SK-N-SH (cell line): ENCODE measurements at regions of chr12 and their contacts with region 1.

Region 1: GRCh38 chr12:32755654-32756475 is at the start of gene YARS2:
- DNase-seq: peak; percentile 90
- H3K4me3 ChIP-seq: peak within 1 kb of the TSS; percentile 87 to 97
- H3K27ac ChIP-seq: peak within 1 kb of the TSS; percentile 82 to 91
- H3K4me1 ChIP-seq: peaks cover 9 to 12% of the 10 kb centered on the region in 2 experiments; a peak in 1 of 4 replicates
- H3K27me3 ChIP-seq: no peaks in the 10 kb centered on the region
- CTCF ChIP-seq: peak; percentile 94
- EP300 ChIP-seq: no peak
- RAD21 ChIP-seq: peak; percentile 98
- polyA plus RNA-seq, gene YARS2: 14.3 and 16.5 TPM in 2 replicates

Region 2: DNA sequence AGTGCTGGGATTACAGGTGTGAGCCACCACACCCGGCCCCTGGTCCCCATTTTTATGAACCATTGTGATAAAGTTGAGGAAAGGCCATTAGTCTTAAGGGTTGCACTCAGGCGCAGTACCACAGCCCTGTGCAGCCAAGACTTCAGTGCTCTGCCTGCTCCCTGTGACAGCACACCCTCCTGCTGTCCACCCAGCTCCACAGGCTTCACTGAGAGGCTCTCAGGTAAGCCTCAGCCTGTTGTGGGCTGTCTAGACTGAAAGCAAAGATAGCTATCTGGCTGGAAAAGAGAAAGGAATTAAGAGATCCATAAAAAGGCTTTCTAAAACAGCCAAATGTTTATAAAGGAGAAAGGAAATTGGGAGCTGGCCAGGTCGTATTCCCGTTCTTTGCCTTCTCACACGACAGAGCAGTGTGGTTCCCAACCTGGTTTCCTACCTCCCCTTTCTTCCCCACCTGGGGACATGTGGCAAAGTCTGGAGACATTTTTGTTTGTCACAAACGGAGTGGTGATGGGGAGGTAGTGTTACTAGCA is 95.9 kb before region 1 on chr12:
- CTCF ChIA-PET with region 1: interaction called, 10 read pairs
- POLR2A ChIA-PET with region 1: no interaction called
- DNase-seq: no peak
- H3K4me3 ChIP-seq: no peak overlapping the region
- H3K27ac ChIP-seq: no peak overlapping the region
- H3K4me1 ChIP-seq: peaks cover 0 to 3% of the 10 kb centered on the region in 2 experiments; a peak in 1 of 4 replicates
- H3K27me3 ChIP-seq: no peaks in the 10 kb centered on the region
- CTCF ChIP-seq: no peak
- EP300 ChIP-seq: no peak
- RAD21 ChIP-seq: no peak

Region 3: DNA sequence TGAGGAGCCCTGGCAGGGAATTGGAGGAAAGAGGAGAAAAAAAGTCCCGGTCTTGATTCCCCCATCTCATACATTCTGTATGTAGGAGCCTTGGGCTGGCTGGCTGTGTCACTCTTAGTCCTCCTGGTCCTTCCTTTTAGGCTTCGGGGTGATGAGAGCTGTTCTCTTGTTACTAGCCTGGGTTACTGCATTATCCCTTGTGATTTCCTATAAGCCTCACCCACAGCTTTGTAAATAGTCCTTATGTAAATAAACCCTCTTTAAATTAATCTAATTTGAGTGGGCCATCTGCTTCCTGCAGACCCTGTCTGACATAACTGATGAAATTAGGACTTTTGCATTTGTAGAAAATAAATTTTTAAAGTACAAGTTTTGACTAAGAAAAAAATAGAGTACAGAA is 57.6 kb before region 1 on chr12:
- CTCF ChIA-PET with region 1: interaction called, 12 read pairs
- POLR2A ChIA-PET with region 1: no interaction called
- DNase-seq: peak; percentile 67
- H3K4me3 ChIP-seq: no peak overlapping the region
- H3K27ac ChIP-seq: peak overlapping the region in 1 of 2 experiments; percentile 90; a peak in 2 of 4 replicates
- H3K4me1 ChIP-seq: peaks cover 5 to 20% of the 10 kb centered on the region in 2 experiments; a peak in 2 of 4 replicates
- H3K27me3 ChIP-seq: no peaks in the 10 kb centered on the region
- CTCF ChIP-seq: no peak
- EP300 ChIP-seq: peak in 1 of 2 experiments; percentile 85; a peak in 2 of 4 replicates
- RAD21 ChIP-seq: peak; percentile 6; the same call in 1 of the 2 replicates

Region 4: GRCh38 chr12:32773691-32774090 is 17.8 kb after region 1 on chr12:
- CTCF ChIA-PET with region 1: interaction called, 22 read pairs
- POLR2A ChIA-PET with region 1: no interaction called
- DNase-seq: no peak
- H3K4me3 ChIP-seq: no peak overlapping the region
- H3K27ac ChIP-seq: no peak overlapping the region
- H3K4me1 ChIP-seq: no peaks in the 10 kb centered on the region
- H3K27me3 ChIP-seq: no peaks in the 10 kb centered on the region
- CTCF ChIP-seq: no peak
- EP300 ChIP-seq: no peak
- RAD21 ChIP-seq: no peak

Region 5: GRCh38 chr12:32877601-32878459 is 122.0 kb after region 1 on chr12:
- CTCF ChIA-PET with region 1: interaction called, 11 read pairs
- POLR2A ChIA-PET with region 1: interaction called, 3 read pairs
- DNase-seq: peak; percentile 64
- H3K4me3 ChIP-seq: no peak overlapping the region; a peak in 1 of 4 replicates
- H3K27ac ChIP-seq: peak overlapping the region in 1 of 2 experiments; percentile 67; a peak in 2 of 4 replicates
- H3K4me1 ChIP-seq: peaks cover 0 to 20% of the 10 kb centered on the region in 2 experiments; a peak in 2 of 4 replicates
- H3K27me3 ChIP-seq: no peaks in the 10 kb centered on the region
- CTCF ChIP-seq: no peak
- EP300 ChIP-seq: no peak
- RAD21 ChIP-seq: no peak

Region 6: GRCh38 chr12:32918890-32919801 is 163.3 kb after region 1 on chr12:
- CTCF ChIA-PET with region 1: interaction called, 150 read pairs
- POLR2A ChIA-PET with region 1: interaction called, 9 read pairs
- DNase-seq: peak; percentile 66
- H3K4me3 ChIP-seq: no peak overlapping the region
- H3K27ac ChIP-seq: no peak overlapping the region
- H3K4me1 ChIP-seq: 0 out of 4 replicates have a peak, but pooled peaks cover 0 to 3% of the 10 kb centered on the region in 2 experiments
- H3K27me3 ChIP-seq: no peaks in the 10 kb centered on the region
- CTCF ChIP-seq: peak; percentile 60
- EP300 ChIP-seq: no peak
- RAD21 ChIP-seq: peak; percentile 88

Region 7: GRCh38 chr12:34022079-34022830 is 1266.4 kb after region 1 on chr12 and contains the start of gene ALG10:
- CTCF ChIA-PET with region 1: interaction called, 12 read pairs
- POLR2A ChIA-PET with region 1: interaction called, 6 read pairs
- DNase-seq: peak; percentile 72
- H3K4me3 ChIP-seq: peak within 1 kb of the TSS; percentile 80 to 99
- H3K27ac ChIP-seq: peak within 1 kb of the TSS; percentile 52 to 67; a peak in 3 of 4 replicates
- H3K4me1 ChIP-seq: peaks cover 0 to 3% of the 10 kb centered on the region in 2 experiments; a peak in 1 of 4 replicates
- H3K27me3 ChIP-seq: no peaks in the 10 kb centered on the region
- CTCF ChIP-seq: peak; percentile 76
- EP300 ChIP-seq: peak in 1 of 2 experiments; percentile 50; a peak in 2 of 4 replicates
- RAD21 ChIP-seq: peak; percentile 77
- polyA plus RNA-seq, gene ALG10: 2.3 and 2.8 TPM in 2 replicates